Posterior vena cava (tissue), 2 donors: ENCODE measurements at regions of chr12 and their contacts with region 1.

Region 1: DNA sequence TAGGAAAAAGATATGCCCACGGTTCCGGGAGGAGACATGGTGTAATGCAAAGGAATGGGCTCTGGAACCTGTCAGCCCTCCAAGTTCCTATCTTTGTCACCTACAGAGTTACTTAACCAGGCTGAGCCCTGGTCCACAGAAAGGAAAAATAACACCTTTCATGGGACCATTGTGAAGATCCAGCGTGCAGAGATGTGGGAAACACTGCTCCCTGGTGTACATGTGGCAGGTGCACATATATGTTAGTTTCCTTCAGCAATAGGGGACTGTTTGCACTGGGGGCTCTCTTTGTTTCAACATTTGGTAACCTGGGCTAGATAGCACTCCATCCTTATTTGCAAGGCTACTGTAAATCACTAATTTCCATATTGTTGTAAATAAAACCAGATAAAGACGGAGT is 72.3 kb downstream of the ANO2 start:
- DNase-seq: no peak

Region 2: DNA sequence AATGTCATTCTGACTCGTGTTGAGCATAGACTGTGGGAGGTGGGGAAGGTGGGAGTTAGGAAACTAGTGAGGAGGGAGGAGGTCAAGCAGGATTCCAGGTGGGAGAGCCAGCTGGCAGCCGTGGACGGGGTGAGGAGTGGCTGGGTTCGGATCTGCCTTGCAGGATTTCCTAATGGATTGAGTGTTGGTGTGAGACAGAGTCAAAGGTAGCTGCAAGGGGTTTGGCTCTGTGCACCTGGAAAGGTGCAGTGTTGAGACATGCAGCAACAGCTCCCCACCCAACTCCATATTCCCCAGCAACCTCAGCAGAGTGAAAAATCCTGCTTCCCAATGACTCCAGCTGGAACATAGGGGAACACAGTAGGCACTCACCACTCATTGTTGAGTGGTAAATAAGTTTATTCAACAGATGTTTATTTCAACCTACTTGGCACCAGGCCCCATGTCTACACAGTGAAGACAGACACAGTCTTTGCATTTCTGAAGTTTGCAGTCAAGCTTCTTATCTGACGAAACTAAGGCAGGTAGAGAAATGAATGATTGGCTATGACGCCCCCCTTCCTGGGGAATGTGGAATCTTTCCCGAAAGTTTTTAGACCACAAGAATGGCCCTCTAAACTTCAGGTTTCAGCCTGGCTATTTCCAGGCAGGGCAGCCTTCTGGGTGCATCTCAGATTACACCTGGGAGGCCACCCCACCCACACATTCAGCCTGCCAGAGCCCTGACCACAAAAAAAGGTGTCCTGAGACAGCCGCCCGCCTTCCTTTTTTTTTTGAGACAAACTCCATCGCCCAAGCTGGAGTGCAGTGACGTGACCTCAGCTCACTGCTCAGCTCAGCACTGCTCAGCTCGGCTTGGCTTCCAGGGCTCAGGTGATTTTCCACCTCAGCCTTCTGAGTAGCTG is 399.8 kb after region 1 on chr12:
- intact Hi-C with region 1: loop called in 1 of 2 experiments (anchors 5 kb)
- DNase-seq: peak; percentile 35